ENCODE measurements at regions of chr1 and their contacts with region 1.

Region 1: GRCh38 chr1:205485338-205486228 is 18.9 kb upstream of the CDK18 start:
- DNase-seq: peak; percentile 94
- H3K27ac ChIP-seq: no peak overlapping the region
- CTCF ChIP-seq: peak; percentile 97

Region 2: DNA sequence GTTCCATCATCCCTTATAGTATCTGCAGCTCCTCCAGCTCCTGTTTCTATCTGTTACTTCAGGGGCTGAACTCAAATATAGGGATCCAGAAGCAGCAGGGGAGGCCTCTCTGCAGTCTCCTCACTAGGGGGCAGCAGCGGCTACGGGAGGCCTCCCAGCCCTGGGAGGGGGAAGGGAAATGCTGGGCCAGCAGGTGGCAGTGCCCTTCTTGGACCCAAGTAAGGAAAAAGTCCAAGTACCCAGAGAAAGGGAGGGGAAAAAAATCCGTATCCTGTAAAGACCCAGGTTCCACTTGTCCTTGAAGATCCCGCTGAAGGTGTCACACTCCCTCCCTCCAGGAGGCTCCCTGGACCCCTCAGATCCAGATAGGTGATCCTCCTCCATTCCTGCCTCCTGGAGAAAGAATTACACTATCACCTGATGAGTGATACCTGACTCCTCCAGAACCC is 149.9 kb before region 1 on chr1:
- CTCF ChIA-PET with region 1: interaction called, 63 read pairs
- POLR2A ChIA-PET with region 1: no interaction called
- DNase-seq: peak; percentile 90
- H3K27ac ChIP-seq: no peak overlapping the region
- CTCF ChIP-seq: peak; percentile 90

Region 3: GRCh38 chr1:205387845-205388244 is 97.7 kb before region 1 on chr1:
- CTCF ChIA-PET with region 1: interaction called, 11 read pairs
- POLR2A ChIA-PET with region 1: no interaction called
- DNase-seq: no peak
- H3K27ac ChIP-seq: no peak overlapping the region
- CTCF ChIP-seq: no peak

Region 4: GRCh38 chr1:205422993-205423625 is 62.5 kb before region 1 on chr1:
- CTCF ChIA-PET with region 1: interaction called, 64 read pairs
- POLR2A ChIA-PET with region 1: no interaction called
- DNase-seq: no peak
- H3K27ac ChIP-seq: no peak overlapping the region
- CTCF ChIP-seq: 0 out of 2 replicates have a peak, but pooled peaks have one; percentile 10

Region 5: DNA sequence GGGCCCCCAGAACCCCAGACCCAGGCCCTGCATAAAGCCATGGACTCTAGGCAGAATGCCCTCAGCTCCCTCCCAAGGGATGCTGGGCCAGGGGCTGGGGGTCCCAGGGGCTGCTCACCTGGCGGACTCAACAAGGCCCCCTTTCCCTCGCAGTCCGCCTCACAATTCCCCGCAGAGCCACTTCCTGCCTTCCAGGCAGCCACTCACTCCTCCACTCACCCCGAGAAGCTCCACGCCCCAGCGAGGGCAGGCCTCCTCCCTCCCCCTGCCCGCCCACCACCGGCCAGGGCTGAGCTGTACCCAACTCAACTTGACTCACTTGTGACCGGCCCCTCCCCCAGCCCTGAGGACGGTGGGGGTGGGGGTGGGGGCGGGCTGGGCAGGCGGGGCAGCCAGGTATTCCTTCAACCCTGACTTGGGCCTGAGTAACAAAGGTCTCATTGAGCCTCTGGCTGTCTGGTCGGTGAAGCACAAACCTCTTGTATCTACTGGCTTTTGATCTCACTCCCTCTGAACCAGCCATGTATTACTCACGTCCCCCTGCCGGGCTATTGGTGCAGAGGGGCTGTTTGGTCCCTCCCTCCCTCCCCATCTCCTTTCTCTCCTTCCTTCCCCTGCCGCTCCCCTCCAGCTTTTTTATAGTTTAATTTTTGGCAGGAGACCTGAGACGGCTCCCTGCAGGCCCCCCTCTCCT is 35.7 kb before region 1 on chr1:
- CTCF ChIA-PET with region 1: interaction called, 18 read pairs
- POLR2A ChIA-PET with region 1: interaction called, 4 read pairs
- DNase-seq: peak; percentile 99
- H3K27ac ChIP-seq: peak overlapping the region; percentile 96
- CTCF ChIP-seq: no peak

Region 6: GRCh38 chr1:205504985-205505729 is 19.6 kb after region 1 on chr1:
- CTCF ChIA-PET with region 1: interaction called, 36 read pairs
- POLR2A ChIA-PET with region 1: no interaction called
- DNase-seq: peak; percentile 65
- H3K27ac ChIP-seq: peak overlapping the region; percentile 86
- CTCF ChIP-seq: no peak

Region 7: GRCh38 chr1:205739348-205740160 is 254.0 kb after region 1 on chr1:
- CTCF ChIA-PET with region 1: no interaction called
- POLR2A ChIA-PET with region 1: no interaction called
- DNase-seq: no peak
- H3K27ac ChIP-seq: peak overlapping the region; percentile 28; the same call in 1 of the 2 replicates
- CTCF ChIP-seq: no peak

Region 8: DNA sequence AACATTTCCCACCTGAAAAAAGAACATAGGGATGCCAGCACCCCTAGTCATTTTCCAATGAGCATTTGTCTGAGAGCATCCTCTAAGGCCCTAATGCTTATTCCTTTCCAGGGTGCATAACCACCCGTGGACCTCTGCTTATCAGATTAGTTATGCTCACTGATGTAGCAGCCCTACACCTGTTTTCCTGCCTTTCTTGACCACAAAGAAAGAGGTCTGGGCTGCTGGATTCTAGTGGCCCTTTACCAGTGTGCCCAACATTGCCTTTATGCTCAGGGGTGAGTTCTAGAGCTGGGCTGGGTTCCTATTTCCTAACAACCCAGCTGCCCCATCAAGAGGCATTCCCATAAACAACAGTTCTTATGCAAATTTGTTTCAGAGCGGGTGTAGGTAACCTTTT is 384.7 kb after region 1 on chr1:
- CTCF ChIA-PET with region 1: no interaction called
- POLR2A ChIA-PET with region 1: no interaction called
- DNase-seq: no peak
- H3K27ac ChIP-seq: no peak overlapping the region
- CTCF ChIP-seq: no peak